Ascending aorta (tissue), 2 donors: ENCODE measurements at regions of chr7 and their contacts with region 1.

Region 1: DNA sequence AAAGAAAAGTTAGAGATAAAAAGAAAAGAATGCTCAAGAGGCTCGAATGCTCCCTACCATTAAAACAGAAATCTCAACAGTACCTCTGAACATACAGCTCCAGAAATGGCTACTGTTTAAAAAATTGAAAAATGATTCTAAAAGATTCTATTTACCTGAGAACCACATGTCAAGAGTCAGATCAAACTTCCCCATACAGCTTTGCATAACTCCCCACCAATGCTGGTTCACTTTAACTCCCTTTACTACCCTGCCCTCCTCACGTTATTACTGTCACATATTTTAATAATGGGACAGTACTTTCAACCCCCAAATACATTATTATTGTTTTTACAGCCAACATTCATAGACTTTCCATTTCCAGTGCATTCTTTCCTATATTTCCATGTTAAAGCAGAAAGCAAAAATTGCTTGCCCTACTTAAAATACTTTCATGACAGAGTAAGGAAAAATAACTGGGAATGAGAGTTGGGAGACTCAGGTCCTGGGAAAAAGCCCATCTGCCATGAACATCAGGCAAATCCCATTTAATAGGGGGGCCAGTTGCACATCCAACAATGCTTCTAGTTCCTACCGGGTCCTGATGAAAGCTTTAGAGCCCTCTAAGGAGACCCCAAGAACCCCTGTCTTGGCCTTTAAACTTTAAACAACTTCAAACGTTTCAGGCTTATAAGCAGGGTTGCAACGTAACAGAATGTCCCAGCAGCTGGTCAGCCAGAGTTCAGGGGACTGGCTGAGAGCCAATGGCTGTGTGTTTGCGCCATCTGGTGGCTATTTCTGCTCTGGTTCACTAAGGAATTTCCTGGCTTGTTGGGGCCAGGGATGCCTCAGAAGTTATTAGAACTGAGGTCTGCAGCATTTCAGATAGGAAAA is 247.4 kb downstream of the ELMO1 start:
- DNase-seq: peak; percentile 38 to 91
- H3K4me3 ChIP-seq: no peak overlapping the region
- H3K27ac ChIP-seq: peak overlapping the region; percentile 67 to 85
- H3K4me1 ChIP-seq: peaks cover 0 to 17% of the 10 kb centered on the region in 2 donors
- H3K27me3 ChIP-seq: no peaks in the 10 kb centered on the region
- CTCF ChIP-seq: peak; percentile 62 to 86 (median 71)

Region 2: GRCh38 chr7:36820527-36821170 is 380.6 kb before region 1 on chr7:
- intact Hi-C with region 1: no loop called
- DNase-seq: no peak
- H3K4me3 ChIP-seq: no peak overlapping the region
- H3K27ac ChIP-seq: no peak overlapping the region
- H3K4me1 ChIP-seq: no peaks in the 10 kb centered on the region
- H3K27me3 ChIP-seq: no peaks in the 10 kb centered on the region
- CTCF ChIP-seq: no peak

Region 3: DNA sequence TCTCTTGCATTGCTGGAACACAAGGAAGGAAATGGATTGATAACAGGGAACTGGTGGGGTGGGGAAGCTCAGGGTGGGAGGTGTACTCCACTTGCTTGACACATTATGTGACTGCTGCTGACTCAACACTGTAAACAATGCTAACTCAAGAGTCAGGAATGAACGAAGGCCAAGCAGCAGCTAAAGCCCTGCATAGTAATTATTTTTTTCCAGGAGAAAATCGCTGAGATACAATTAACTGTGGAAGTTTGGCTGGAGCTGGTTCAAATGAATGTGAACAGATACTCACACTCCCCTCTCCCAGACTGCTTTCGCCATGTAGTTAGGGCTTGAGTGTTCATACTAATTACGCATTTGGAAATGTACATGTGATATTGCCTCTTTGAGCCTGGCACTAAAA is 306.0 kb before region 1 on chr7:
- intact Hi-C with region 1: no loop called
- DNase-seq: no peak
- H3K4me3 ChIP-seq: no peak overlapping the region
- H3K27ac ChIP-seq: no peak overlapping the region
- H3K4me1 ChIP-seq: no peaks in the 10 kb centered on the region
- H3K27me3 ChIP-seq: no peaks in the 10 kb centered on the region
- CTCF ChIP-seq: no peak

Region 4: DNA sequence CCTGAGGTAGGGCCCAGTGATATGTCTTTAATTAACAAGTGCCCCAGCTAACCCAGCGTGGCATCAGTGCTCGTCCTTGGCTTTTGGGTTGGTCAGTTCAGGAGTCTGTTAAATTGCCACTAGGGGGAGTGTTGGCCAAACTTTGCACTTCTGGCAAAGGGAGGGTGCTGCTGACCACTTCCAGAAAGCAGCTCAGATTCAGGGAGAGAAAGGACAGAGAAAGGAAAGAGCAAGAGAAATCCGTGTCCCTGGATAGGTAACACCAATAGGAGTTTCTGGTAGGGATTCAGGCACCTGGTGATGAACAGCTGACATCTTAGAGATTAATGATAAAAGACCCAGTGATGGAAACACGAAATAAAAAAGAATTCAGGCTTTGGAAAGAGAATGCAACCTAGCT is 233.9 kb before region 1 on chr7:
- intact Hi-C with region 1: loop called (anchors 1 kb)
- DNase-seq: peak in 1 of 2 donors; percentile 79
- H3K4me3 ChIP-seq: no peak overlapping the region
- H3K27ac ChIP-seq: no peak overlapping the region
- H3K4me1 ChIP-seq: no peaks in the 10 kb centered on the region
- H3K27me3 ChIP-seq: no peaks in the 10 kb centered on the region
- CTCF ChIP-seq: peak; percentile 60 to 81 (median 76)

Region 5: DNA sequence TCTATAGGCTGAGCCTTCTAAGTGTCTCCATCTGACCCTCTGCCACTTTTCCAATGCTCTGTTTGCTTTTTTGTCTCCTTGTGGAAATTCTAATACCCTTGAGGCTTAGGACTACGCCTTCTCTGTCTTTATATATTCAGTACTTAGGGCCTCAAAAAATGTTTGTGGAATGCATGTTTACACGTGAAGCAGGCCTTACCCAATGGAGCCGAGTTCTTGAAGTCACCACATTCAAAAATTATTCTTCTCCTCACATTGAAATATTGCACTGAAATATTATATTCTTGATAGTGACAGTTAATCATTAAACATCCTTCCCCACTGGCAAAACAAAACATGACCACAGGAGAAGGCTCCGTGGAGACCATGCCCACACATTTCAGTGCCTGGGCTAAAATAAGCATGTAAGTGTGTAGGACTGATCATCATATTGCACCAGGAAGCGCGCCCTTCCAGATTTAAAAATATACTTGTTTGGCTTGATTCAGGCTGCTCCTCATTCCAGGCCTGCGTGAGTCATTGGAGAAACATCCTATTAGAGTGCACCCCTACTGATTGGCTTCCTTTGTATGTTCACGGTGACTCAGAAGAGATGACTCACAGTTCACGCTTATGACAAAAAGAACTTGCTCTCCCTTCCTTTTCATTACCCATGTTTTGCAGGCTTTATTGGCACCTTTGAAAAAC is 169.5 kb before region 1 on chr7:
- intact Hi-C with region 1: loop called (anchors 5 kb)
- DNase-seq: peak; percentile 68 to 95
- H3K4me3 ChIP-seq: no peak overlapping the region
- H3K27ac ChIP-seq: peak overlapping the region; percentile 80 to 84
- H3K4me1 ChIP-seq: peaks cover 3 to 19% of the 10 kb centered on the region in 2 donors
- H3K27me3 ChIP-seq: no peaks in the 10 kb centered on the region
- CTCF ChIP-seq: no peak

Region 6: GRCh38 chr7:37531225-37531624 is 330.0 kb after region 1 on chr7:
- intact Hi-C with region 1: no loop called
- DNase-seq: no peak
- H3K4me3 ChIP-seq: no peak overlapping the region
- H3K27ac ChIP-seq: no peak overlapping the region
- H3K4me1 ChIP-seq: peaks cover 0 to 3% of the 10 kb centered on the region in 2 donors
- H3K27me3 ChIP-seq: no peaks in the 10 kb centered on the region
- CTCF ChIP-seq: no peak

Region 7: GRCh38 chr7:37916673-37917660 is 715.7 kb after region 1 on chr7 and contains the start of gene SFRP4:
- intact Hi-C with region 1: loop called (anchors 5 kb)
- DNase-seq: peak; percentile 17 to 86
- H3K4me3 ChIP-seq: peak within 1 kb of the TSS; percentile 67 to 74
- H3K27ac ChIP-seq: peak within 1 kb of the TSS; percentile 88
- H3K4me1 ChIP-seq: peaks cover 0 to 6% of the 10 kb centered on the region in 2 donors
- H3K27me3 ChIP-seq: no peaks in the 10 kb centered on the region
- CTCF ChIP-seq: peak; percentile 56 to 76 (median 73)
- total RNA-seq, gene SFRP4: 25.7 TPM